Brain microvascular endothelial cell (primary cell): ENCODE measurements at regions of chr20 and their contacts with region 1.

Region 1: DNA sequence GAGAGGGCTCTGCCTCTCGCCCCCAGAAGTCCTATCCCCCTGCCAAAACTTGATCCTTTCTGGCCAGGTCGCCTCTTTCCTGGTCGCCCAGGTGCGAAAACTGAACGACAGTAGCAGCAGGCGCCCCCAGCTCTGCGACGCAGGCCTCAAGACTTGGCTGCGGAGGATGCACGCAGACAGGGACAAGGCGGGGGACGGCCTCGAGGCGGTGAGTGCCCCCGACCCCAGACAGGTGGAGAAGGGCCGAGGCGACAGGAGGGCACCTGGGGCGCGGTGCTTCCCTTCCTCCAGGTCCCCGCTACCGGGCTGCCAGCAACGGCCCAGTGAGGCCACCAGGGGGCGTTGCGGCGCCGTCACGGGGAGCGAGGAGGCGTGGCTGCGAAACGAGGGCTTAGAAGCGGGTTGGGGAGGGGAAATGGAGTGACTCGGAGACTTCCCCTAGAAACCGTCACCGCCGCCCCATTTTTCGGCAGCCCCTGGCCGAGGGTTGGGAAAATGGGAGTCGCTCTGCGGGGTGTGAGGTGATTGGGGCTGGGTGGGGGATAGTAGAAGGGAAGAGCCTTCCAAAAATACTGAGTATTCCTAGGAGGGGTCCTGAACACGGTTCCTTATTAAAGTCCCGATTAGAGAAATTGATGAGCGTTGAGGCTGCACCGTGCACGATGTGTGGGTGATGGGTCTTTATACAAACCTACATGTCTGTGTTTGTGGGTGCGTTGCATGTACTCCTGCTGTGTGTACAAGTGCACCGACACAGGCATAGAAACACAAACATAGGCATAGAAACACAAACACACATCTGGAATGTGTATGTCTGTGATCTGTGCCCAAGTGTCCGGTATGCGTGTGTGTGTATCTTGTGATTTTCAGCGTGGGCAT is 44.6 kb downstream of the ARHGAP40 start:
- DNase-seq: peak; percentile 16
- H3K4me3 ChIP-seq: peak overlapping the region; percentile 9
- H3K27ac ChIP-seq: no peak overlapping the region
- H3K27me3 ChIP-seq: peaks cover 29% of the 10 kb centered on the region
- CTCF ChIP-seq: peak; percentile 90

Region 2: DNA sequence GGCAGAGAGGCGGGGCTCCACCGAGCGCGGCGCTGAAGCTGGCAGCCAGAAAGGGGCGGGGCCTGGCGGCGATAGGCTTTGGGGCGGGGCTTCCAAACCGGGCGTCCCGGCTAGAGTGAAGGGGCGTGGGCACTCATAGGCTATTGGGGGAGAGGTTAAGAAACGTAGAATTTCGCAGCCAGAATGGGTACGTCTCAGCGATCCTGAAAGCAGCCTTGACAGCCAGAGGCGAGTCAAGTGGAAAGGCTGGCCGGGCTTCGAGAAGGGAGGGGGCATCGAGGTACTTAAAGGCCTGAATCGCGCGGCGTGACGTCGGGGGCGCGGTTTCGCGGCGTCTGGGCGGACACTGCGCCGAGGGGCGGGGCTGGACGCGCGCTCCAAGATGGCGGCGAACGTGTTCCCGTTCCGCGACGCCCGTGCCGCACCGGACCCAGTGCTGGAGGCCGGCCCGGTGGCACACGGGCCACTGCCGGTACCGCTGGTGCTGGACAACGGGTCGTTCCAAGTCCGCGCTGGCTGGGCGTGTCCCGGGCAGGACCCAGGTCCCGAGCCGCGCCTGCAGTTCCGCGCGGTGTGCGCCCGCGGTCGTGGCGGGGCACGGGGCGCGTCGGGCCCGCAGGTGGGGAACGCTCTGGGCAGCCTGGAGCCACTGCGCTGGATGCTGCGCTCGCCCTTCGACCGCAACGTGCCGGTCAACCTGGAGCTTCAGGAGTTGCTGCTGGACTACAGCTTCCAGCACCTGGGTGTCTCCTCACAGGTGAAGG is 102.1 kb after region 1 on chr20 and contains the start of gene ACTR5:
- in situ Hi-C with region 1: loop called (anchors 25 kb)
- DNase-seq: peak; percentile 84
- H3K4me3 ChIP-seq: peak within 1 kb of the TSS; percentile 91
- H3K27ac ChIP-seq: peak within 1 kb of the TSS; percentile 80
- H3K27me3 ChIP-seq: no peaks in the 10 kb centered on the region
- CTCF ChIP-seq: no peak